Sigmoid colon (tissue), 7 donors: ENCODE measurements at regions of chr3 and their contacts with region 1.

Region 1: DNA sequence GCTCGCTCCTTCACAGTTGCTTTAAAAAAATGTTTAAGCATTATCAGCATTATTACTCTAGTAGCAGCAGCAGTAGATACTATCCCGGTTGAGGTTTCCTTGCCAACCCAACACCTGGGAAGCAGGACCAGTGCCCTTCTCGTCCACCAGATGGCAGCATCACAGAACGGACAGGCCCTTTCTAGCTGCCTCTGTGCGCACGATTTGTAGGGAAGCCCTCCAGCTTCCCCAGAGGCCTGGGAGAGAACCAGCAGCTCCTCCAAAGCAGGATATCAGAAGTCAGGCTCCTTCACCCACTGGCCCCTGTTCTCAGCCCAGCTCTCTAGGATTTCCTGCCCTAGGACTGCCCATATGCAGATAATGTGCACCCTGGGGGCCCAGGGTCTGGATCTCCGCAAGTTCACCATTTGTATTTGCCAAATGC is 16.8 kb upstream of the ESYT3 start:
- DNase-seq: peak; percentile 90
- H3K4me3 ChIP-seq: no peak overlapping the region
- H3K27ac ChIP-seq: no peak overlapping the region
- H3K4me1 ChIP-seq: peaks cover 0 to 7% (median 4%) of the 10 kb centered on the region in 4 donors
- H3K27me3 ChIP-seq: no peaks in the 10 kb centered on the region
- CTCF ChIP-seq: peak; percentile 81 to 94 (median 86)
- EP300 ChIP-seq: no peak
- POLR2A ChIP-seq: no peak

Region 2: GRCh38 chr3:138493804-138494606 is 76.4 kb after region 1 on chr3:
- intact Hi-C with region 1: loop called (anchors 1 kb)
- DNase-seq: no peak
- H3K4me3 ChIP-seq: no peak overlapping the region
- H3K27ac ChIP-seq: peak overlapping the region in 3 of 4 donors; percentile 3 to 47 (median 9)
- H3K4me1 ChIP-seq: peaks cover 0 to 18% (median 12%) of the 10 kb centered on the region in 4 donors
- H3K27me3 ChIP-seq: no peaks in the 10 kb centered on the region
- CTCF ChIP-seq: no peak
- EP300 ChIP-seq: no peak
- POLR2A ChIP-seq: no peak

Region 3: DNA sequence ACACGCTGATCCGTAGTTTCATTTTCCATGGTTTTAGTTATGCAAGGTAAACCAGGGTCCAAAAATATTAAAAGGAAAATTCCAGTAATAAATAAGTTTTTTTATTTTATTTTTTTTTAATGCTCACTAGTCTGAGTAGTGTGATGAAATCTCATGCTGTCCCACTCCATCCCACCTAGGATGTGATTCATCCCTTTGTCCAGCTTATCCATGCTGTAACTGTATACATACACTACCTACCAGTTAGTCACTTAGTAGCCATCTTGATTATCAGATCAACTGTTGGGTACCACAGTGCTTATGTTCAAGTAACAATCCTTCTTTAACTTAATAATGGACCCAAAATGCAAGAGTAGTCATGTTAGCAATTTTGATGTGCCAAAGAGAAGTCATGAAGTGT is 92.0 kb after region 1 on chr3:
- intact Hi-C with region 1: loop called (anchors 5 kb)
- DNase-seq: no peak
- H3K4me3 ChIP-seq: no peak overlapping the region
- H3K27ac ChIP-seq: no peak overlapping the region
- H3K4me1 ChIP-seq: peaks cover 0 to 16% (median 2%) of the 10 kb centered on the region in 4 donors
- H3K27me3 ChIP-seq: no peaks in the 10 kb centered on the region
- CTCF ChIP-seq: no peak
- EP300 ChIP-seq: no peak
- POLR2A ChIP-seq: no peak

Region 4: GRCh38 chr3:138594150-138594934 is 176.8 kb after region 1 on chr3 and contains the start of gene CEP70:
- intact Hi-C with region 1: loop called (anchors 2 kb)
- DNase-seq: peak; percentile 98
- H3K4me3 ChIP-seq: peak within 1 kb of the TSS; percentile 55 to 78 (median 74)
- H3K27ac ChIP-seq: peak within 1 kb of the TSS; percentile 94
- H3K4me1 ChIP-seq: peaks cover 0 to 14% (median 10%) of the 10 kb centered on the region in 4 donors
- H3K27me3 ChIP-seq: no peaks in the 10 kb centered on the region
- CTCF ChIP-seq: peak; percentile 85 to 97 (median 90)
- EP300 ChIP-seq: peak in 1 of 4 donors; percentile 14
- POLR2A ChIP-seq: peak; percentile 90 to 92
- total RNA-seq, gene CEP70: 42.6 to 77.2 (median 66.8) TPM

Region 5: GRCh38 chr3:138915503-138916498 is 498.2 kb after region 1 on chr3:
- intact Hi-C with region 1: loop called (anchors 1 kb)
- DNase-seq: peak; percentile 96
- H3K4me3 ChIP-seq: peak overlapping the region; percentile 63 to 82 (median 67)
- H3K27ac ChIP-seq: peak overlapping the region; percentile 89 to 96 (median 92)
- H3K4me1 ChIP-seq: peaks cover 0 to 15% (median 11%) of the 10 kb centered on the region in 4 donors
- H3K27me3 ChIP-seq: no peaks in the 10 kb centered on the region
- CTCF ChIP-seq: peak; percentile 84 to 92 (median 88)
- EP300 ChIP-seq: no peak
- POLR2A ChIP-seq: no peak